Gastrocnemius medialis (tissue), 4 donors: ENCODE measurements at regions of chr11 and their contacts with region 1.

Region 1: DNA sequence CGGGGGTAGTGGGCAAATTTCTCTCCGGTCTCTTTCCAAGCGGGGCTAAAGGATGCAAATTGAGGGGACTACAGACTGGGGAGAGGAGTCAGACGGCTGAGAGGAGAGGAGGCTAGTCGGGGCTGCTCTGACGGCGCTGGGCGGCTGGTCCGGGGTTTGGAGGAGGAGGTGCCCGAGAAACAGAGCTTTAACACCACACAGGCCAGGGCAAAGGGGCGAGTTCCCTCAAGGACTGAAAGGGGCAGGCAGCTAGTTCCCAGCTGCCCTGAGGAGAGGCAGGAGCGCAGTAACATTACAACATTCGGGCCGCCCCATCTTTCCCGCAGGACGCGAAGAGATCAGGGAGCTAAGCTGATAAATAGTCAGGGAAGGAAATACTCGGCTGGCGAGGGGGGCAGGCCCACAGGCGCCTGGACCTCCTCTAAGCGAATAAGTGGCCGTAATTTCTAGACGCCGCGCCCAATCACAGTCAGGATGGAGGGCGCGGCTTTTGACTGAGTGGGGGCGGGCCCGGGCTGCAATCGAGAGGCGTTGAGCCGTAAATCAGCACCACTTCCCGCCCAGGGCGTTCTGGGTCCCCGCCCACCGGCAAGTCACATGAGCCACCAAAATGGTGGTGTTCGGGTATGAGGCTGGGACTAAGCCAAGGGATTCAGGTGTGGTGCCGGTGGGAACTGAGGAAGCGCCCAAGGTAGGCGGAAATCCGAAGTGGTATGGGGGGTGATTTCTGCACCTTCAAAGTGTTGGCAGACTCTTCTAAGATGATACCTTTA is at the start of gene TMEM126B:
- DNase-seq: peak; percentile 98
- ATAC-seq: peak; percentile 91 to 93
- H3K4me3 ChIP-seq: peak within 1 kb of the TSS; percentile 69 to 99 (median 86)
- H3K27ac ChIP-seq: peak within 1 kb of the TSS; percentile 90 to 98 (median 95)
- H3K4me1 ChIP-seq: peaks cover 28 to 33% of the 10 kb centered on the region in 2 donors
- H3K27me3 ChIP-seq: no peaks in the 10 kb centered on the region
- CTCF ChIP-seq: no peak
- POLR2A ChIP-seq: peak; percentile 86 to 92
- total RNA-seq, gene TMEM126B: 13.6 to 38.6 (median 28.6) TPM

Region 2: DNA sequence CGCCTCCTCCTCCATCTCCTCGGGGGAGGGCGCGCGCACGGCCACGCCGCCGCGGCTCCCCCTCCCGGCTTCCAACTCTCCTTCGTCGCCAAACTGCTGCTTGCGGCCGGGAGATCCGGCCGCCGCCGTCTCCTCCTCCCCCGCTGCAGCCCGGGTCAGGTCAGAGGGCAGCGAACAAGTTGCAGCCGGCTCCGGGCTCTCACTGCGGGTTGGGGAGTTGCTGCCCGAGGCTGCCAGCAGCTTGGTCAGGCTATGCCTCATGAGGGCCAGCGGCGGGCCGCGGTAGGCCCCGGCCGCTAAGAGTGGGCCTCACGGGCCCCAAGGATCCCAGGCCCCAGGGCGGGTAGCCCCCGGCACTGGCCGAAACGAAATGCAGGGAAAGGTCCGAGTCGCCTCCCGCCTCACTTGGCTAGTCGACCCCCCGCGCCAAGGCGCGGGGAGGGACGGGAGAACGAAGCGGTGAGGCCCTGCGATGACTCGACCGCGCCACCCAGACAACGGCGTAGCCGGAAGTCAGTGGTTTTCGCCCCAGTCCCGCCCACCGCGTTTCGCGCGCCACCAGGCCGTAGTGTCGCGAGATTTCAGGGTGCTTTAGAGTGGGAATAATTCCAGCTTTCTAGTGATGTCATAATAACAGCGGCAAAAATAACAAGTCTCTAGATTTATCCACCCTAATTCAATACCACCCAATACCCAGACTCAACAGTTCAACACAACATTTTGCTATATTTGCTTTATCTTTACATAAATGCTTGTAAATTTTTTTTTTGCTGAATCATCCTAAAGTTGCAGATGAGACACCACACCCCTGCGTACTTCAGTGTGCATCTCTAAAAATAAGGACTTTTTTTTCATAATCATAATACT is 36.7 kb after region 1 on chr11 and contains the start of gene CREBZF:
- in situ Hi-C with region 1: no loop called
- intact Hi-C with region 1: loop called (anchors 1 kb)
- DNase-seq: peak; percentile 88 to 91
- ATAC-seq: peak; percentile 94
- H3K4me3 ChIP-seq: peak within 1 kb of the TSS; percentile 91 to 98 (median 97)
- H3K27ac ChIP-seq: peak within 1 kb of the TSS; percentile 93 to 99 (median 98)
- H3K4me1 ChIP-seq: peaks cover 35 to 42% of the 10 kb centered on the region in 2 donors
- H3K27me3 ChIP-seq: no peaks in the 10 kb centered on the region
- CTCF ChIP-seq: peak in 1 of 5 experiments; percentile 15
- POLR2A ChIP-seq: peak; percentile 96 to 98
- total RNA-seq, gene CREBZF: 15.3 to 52.3 (median 16.4) TPM

Region 3: DNA sequence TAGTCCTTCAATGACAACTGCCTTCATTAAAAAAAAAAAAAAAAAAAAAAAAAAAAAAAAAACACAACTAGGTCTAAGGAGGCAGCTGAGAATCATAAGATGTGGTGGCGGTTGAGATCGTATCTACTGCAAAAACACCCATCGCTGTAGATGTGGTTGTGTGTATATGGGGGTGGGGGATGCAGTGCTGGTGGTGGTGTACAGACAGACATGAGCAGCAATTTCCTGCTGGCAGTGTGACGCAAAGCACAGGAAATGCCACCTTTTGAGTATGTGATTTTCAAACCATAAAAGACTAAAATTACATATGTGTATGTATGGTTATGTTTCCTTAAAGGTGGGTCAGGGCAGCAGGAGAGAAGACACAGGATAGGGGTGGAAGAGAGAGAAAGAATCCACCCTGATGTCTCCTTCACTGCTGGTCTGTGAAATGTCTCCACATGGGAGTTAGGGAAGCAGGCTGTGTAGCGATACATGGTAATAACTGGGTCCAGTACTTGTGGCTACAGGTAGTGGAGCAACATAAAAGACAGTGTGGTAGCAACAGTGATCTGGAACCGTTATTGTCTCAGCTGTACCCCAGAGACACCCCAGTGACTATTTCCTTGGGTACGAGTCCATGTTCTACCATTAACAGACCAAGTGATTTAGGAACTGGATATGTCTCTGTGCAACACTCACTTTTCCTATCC is 124.9 kb after region 1 on chr11:
- in situ Hi-C with region 1: no loop called
- intact Hi-C with region 1: no loop called
- DNase-seq: peak in 1 of 2 donors; percentile 35
- ATAC-seq: no peak
- H3K4me3 ChIP-seq: no peak overlapping the region
- H3K27ac ChIP-seq: no peak overlapping the region
- H3K4me1 ChIP-seq: no peaks in the 10 kb centered on the region
- H3K27me3 ChIP-seq: no peaks in the 10 kb centered on the region
- CTCF ChIP-seq: no peak
- POLR2A ChIP-seq: no peak

Region 4: GRCh38 chr11:85854557-85855340 is 226.6 kb after region 1 on chr11:
- in situ Hi-C with region 1: loop called in 1 of 4 experiments (anchors 25 kb)
- intact Hi-C with region 1: loop called (anchors 1 kb)
- DNase-seq: peak; percentile 68 to 85
- ATAC-seq: peak; percentile 94 to 96
- H3K4me3 ChIP-seq: peak overlapping the region; percentile 54 to 71 (median 61)
- H3K27ac ChIP-seq: peak overlapping the region; percentile 78 to 91 (median 80)
- H3K4me1 ChIP-seq: peaks cover 4 to 5% of the 10 kb centered on the region in 2 donors
- H3K27me3 ChIP-seq: no peaks in the 10 kb centered on the region
- CTCF ChIP-seq: peak; percentile 84 to 99 (median 93)
- POLR2A ChIP-seq: peak in 1 of 2 donors; percentile 35

Region 5: DNA sequence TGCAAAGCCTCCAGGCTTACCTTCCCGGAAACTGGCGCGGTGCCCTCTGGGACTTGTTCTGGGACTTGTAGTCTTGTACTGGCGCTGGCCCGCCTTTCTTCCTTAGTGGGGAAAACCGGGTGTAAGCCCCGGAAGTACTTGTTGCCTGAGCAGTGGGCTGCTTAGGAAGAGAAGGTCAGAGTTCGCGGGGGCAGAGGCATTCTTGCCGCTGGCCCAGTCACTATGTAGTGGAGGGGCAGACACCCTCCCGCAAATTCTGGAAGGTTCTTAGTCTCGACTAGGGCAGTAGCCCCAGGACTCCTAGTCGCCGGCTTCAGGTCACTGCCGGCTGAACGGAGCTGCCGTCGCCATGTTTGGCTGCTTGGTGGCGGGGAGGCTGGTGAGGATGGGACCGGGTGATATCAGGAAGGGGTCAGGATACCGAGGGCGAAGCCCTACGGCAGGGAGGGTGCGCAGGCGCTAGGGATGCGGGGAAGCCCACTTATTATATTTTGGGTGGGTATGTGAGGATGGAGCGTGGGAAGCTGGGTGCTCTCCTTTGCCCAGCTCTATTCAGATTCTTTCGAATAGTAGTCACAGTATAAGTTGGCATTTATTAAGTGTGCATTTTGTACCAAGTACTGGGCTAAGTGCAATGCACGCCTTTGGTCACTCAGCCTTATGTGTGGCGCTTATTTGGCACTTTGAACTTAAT is 674.1 kb after region 1 on chr11 and contains the start of gene HIKESHI:
- in situ Hi-C with region 1: no loop called
- intact Hi-C with region 1: loop called (anchors 1 kb)
- DNase-seq: peak; percentile 99
- ATAC-seq: peak; percentile 99 to 100
- H3K4me3 ChIP-seq: peak within 1 kb of the TSS; percentile 65 to 100 (median 78)
- H3K27ac ChIP-seq: peak within 1 kb of the TSS; percentile 83 to 94 (median 86)
- H3K4me1 ChIP-seq: peaks cover 14 to 28% of the 10 kb centered on the region in 2 donors
- H3K27me3 ChIP-seq: no peaks in the 10 kb centered on the region
- CTCF ChIP-seq: peak in 1 of 5 experiments; percentile 6
- POLR2A ChIP-seq: peak; percentile 43 to 52
- total RNA-seq, gene HIKESHI: 30.1 to 60.9 (median 51.8) TPM